Calu3 (cell line): ENCODE measurements at regions of chr7 and their contacts with region 1.

Region 1: GRCh38 chr7:131424219-131424822 is 96.6 kb downstream of the MKLN1 start:
- DNase-seq: no peak
- H3K4me3 Mint-ChIP-seq: no peak overlapping the region
- H3K27ac Mint-ChIP-seq: no peak overlapping the region
- H3K4me1 Mint-ChIP-seq: no peaks in the 10 kb centered on the region
- H3K27me3 Mint-ChIP-seq: no peaks in the 10 kb centered on the region
- CTCF ChIP-seq: peak; percentile 40

Region 2: DNA sequence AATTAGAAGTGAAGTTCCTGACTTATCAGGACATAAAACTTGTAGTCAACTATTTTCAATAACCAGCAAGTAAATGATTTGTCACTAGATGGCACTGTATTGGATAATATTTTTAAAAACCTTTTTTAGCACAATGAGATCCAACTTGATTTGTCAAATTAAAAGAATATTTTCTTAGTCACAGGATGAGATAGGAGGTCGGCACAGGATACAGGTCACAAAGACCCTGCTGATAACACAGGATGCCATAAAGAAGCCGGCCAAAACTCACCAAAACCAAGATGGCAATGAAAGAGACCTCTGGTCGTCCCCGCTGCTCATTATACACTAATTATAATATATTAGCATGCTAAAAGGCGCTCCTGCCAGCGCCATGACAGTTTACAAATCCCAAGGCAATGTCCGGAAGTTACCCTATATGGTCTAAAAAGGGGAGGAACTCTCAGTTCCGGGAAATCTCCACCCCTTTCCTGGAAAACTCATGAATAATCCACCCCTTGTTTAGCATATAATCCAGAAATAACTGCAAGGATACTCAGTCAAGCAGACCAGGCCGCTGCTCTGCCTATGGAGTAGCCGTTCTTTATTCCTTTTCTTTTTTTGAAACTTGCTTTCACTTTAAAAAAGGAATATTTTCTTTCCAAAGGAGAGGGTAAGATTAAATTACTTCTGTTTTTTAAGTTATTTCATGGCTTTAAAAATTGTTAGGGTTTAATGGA is 352.4 kb before region 1 on chr7:
- CTCF ChIA-PET with region 1: no interaction called
- intact Hi-C with region 1: loop called (anchors 2 kb)
- DNase-seq: peak; percentile 81
- H3K4me3 Mint-ChIP-seq: peak overlapping the region; percentile 50
- H3K27ac Mint-ChIP-seq: peak overlapping the region; percentile 58
- H3K4me1 Mint-ChIP-seq: peaks cover 26% of the 10 kb centered on the region
- H3K27me3 Mint-ChIP-seq: no peaks in the 10 kb centered on the region
- CTCF ChIP-seq: peak; percentile 67

Region 3: DNA sequence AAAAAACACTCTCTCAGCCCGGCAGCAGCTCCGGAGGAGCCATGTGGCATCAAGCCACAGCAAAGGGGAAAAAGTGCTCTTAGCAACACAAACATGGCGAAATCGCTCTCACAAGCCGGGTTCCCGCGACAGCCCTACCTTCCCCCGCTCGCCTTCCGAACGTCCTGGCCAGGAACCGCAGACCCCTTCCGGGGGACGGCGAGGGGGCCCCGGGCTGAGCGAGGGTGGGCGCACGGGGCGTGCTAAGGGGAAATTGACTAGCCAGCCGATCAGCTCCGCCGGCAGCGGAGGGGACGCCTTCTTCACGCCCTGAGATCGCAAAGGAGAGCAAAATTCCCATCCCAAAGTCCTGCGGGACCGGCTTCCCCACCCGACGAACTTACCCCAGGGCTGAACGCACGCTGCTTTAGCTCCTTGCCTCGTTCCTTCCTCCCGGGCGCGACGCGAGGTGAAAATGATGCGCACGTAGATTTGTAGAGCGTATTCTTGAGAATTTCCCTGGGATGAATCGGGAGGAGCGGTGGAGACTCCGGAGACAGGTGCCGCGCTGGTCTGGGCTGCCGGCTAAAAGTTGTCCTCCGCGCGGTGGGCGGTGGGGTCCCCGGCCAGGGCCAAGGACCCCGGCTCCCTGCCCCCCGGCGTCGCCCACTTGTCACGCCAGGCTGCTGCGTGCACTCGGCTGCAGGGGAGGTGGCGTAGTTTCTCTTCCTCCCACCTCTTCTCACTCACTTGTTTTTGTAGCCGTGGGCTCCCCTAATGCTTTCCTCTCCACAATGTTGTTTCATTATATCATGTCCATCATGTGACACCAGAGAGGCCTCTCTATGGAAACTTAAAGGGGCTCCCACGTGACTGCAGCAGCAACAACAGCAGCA is 316.7 kb before region 1 on chr7:
- CTCF ChIA-PET with region 1: no interaction called
- intact Hi-C with region 1: loop called (anchors 1 kb)
- DNase-seq: peak; percentile 52
- H3K4me3 Mint-ChIP-seq: peak overlapping the region; percentile 100
- H3K27ac Mint-ChIP-seq: peak overlapping the region; percentile 91
- H3K4me1 Mint-ChIP-seq: peaks cover 47% of the 10 kb centered on the region
- H3K27me3 Mint-ChIP-seq: no peaks in the 10 kb centered on the region
- CTCF ChIP-seq: no peak

Region 4: GRCh38 chr7:131327626-131328376 is 96.5 kb before region 1 on chr7 and contains the start of gene MKLN1:
- CTCF ChIA-PET with region 1: no interaction called
- intact Hi-C with region 1: loop called (anchors 5 kb)
- DNase-seq: peak; percentile 93
- H3K4me3 Mint-ChIP-seq: peak within 1 kb of the TSS; percentile 99
- H3K27ac Mint-ChIP-seq: peak within 1 kb of the TSS; percentile 98
- H3K4me1 Mint-ChIP-seq: peaks cover 48% of the 10 kb centered on the region
- H3K27me3 Mint-ChIP-seq: no peaks in the 10 kb centered on the region
- CTCF ChIP-seq: no peak
- total RNA-seq, gene MKLN1: 36.8 and 47.1 TPM in 2 replicates

Region 5: GRCh38 chr7:131370523-131370968 is 53.8 kb before region 1 on chr7:
- CTCF ChIA-PET with region 1: no interaction called
- intact Hi-C with region 1: loop called (anchors 5 kb)
- DNase-seq: no peak
- H3K4me3 Mint-ChIP-seq: no peak overlapping the region
- H3K27ac Mint-ChIP-seq: no peak overlapping the region
- H3K4me1 Mint-ChIP-seq: peaks cover 33% of the 10 kb centered on the region
- H3K27me3 Mint-ChIP-seq: no peaks in the 10 kb centered on the region
- CTCF ChIP-seq: no peak